ENCODE measurements at regions of chr20 and their contacts with region 1.

Region 1: GRCh38 chr20:63309261-63310071 is 16.5 kb downstream of the COL20A1 start:
- DNase-seq: peak; percentile 75
- ATAC-seq: peak; percentile 76
- H3K4me3 Mint-ChIP-seq: no peak overlapping the region
- H3K27ac Mint-ChIP-seq: no peak overlapping the region
- H3K4me1 Mint-ChIP-seq: no peaks in the 10 kb centered on the region
- H3K27me3 Mint-ChIP-seq: peaks cover 3% of the 10 kb centered on the region; the same call in 1 of the 2 replicates
- CTCF ChIP-seq: peak; percentile 94

Region 2: GRCh38 chr20:63272584-63273579 is 36.6 kb before region 1 on chr20 and contains the start of gene ARFGAP1:
- CTCF ChIA-PET with region 1: interaction called, 11 read pairs
- POLR2A ChIA-PET with region 1: no interaction called
- DNase-seq: peak; percentile 92
- ATAC-seq: peak; percentile 93
- H3K4me3 Mint-ChIP-seq: peak within 1 kb of the TSS; percentile 92
- H3K27ac Mint-ChIP-seq: peak within 1 kb of the TSS; percentile 94
- H3K4me1 Mint-ChIP-seq: peaks cover 16% of the 10 kb centered on the region
- H3K27me3 Mint-ChIP-seq: no peaks in the 10 kb centered on the region
- CTCF ChIP-seq: no peak
- total RNA-seq, gene ARFGAP1: 115 to 207 TPM (median 121 TPM) in 3 replicates

Region 3: DNA sequence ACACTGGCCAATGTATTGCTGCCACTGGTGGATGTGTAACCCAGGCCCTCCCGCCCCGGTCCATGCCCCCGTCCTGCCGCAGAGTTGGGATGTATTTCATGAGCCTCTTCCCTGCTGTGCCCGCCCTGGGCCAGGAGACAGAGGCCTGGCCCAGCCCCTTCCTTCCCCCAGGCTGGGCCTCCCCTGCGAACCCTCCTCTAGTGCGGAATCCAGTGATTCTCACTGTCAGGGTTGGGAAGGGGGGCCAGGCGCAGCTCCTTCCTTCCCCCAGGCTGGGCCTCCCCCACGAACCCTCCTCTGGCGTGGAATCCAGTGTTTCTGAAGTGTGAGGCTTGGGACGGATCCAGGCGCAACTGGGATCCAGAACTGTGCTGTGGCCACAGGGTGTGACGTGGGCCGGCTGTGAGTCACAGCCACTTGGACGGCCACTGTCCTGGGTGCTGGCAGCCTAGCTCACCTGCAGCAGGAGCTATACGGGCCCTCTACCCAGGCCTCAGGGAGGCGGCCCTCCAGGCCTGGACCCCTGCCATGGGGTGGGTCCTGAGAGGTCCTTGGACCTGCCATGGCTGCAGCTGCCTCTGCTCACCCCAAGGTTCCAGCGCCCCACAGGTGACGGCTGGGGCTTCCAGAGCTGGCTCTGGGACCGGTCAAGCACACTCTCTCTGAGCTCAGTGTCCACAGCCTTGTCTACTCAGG is 11.8 kb after region 1 on chr20:
- CTCF ChIA-PET with region 1: interaction called, 17 read pairs
- POLR2A ChIA-PET with region 1: no interaction called
- DNase-seq: no peak
- ATAC-seq: no peak
- H3K4me3 Mint-ChIP-seq: no peak overlapping the region
- H3K27ac Mint-ChIP-seq: no peak overlapping the region
- H3K4me1 Mint-ChIP-seq: peaks cover 2% of the 10 kb centered on the region; the same call in 1 of the 2 replicates
- H3K27me3 Mint-ChIP-seq: no peaks in the 10 kb centered on the region
- CTCF ChIP-seq: no peak

Region 4: GRCh38 chr20:63351811-63352591 is 42.5 kb after region 1 on chr20:
- CTCF ChIA-PET with region 1: interaction called, 18 read pairs
- POLR2A ChIA-PET with region 1: no interaction called
- DNase-seq: peak; percentile 79
- ATAC-seq: peak; percentile 87
- H3K4me3 Mint-ChIP-seq: no peak overlapping the region
- H3K27ac Mint-ChIP-seq: no peak overlapping the region
- H3K4me1 Mint-ChIP-seq: peaks cover 6% of the 10 kb centered on the region
- H3K27me3 Mint-ChIP-seq: no peaks in the 10 kb centered on the region
- CTCF ChIP-seq: no peak

Region 5: GRCh38 chr20:63366390-63367365 is 57.2 kb after region 1 on chr20:
- CTCF ChIA-PET with region 1: interaction called, 25 read pairs
- POLR2A ChIA-PET with region 1: no interaction called
- DNase-seq: no peak
- ATAC-seq: no peak
- H3K4me3 Mint-ChIP-seq: no peak overlapping the region
- H3K27ac Mint-ChIP-seq: no peak overlapping the region; the same call in 1 of the 2 replicates
- H3K4me1 Mint-ChIP-seq: peaks cover 18% of the 10 kb centered on the region
- H3K27me3 Mint-ChIP-seq: peaks cover 9% of the 10 kb centered on the region
- CTCF ChIP-seq: no peak

Region 6: GRCh38 chr20:63495741-63496595 is 186.5 kb after region 1 on chr20:
- CTCF ChIA-PET with region 1: interaction called, 12 read pairs
- POLR2A ChIA-PET with region 1: no interaction called
- DNase-seq: peak; percentile 87
- ATAC-seq: peak; percentile 61
- H3K4me3 Mint-ChIP-seq: peak overlapping the region; percentile 52
- H3K27ac Mint-ChIP-seq: no peak overlapping the region
- H3K4me1 Mint-ChIP-seq: peaks cover 7% of the 10 kb centered on the region
- H3K27me3 Mint-ChIP-seq: peaks cover 38% of the 10 kb centered on the region
- CTCF ChIP-seq: peak; percentile 97

Region 7: DNA sequence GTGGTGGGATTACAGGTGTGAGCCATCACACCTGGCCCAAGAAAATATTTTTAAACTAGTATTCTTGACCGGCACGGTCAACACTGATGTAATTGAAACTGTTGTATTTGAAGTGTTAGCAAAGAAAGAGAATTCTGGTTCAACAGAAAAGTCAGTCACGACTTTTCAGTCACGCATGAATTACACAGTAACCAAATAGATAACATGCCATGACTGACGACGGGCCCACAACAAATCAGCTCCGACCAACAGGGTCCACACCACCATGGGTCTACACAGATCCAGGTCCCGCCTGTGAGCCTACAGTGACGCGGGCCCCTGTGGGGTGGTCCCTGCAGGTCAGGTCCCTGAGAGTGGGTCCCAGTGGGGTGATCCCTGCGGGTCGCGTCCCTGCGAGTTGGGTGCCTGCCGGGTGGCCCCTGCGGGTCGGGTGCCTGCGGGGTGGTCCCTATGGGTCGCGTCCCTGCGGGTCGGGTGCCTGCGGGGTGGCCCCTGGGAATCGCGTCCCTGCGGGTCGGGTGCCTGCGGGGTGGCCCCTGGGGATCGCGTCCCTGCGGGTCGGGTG is 316.5 kb after region 1 on chr20:
- CTCF ChIA-PET with region 1: no interaction called
- POLR2A ChIA-PET with region 1: no interaction called
- DNase-seq: no peak
- ATAC-seq: peak; percentile 29; the same call in 1 of the 2 replicates
- H3K4me3 Mint-ChIP-seq: peak overlapping the region; percentile 70
- H3K27ac Mint-ChIP-seq: peak overlapping the region; percentile 97
- H3K4me1 Mint-ChIP-seq: peaks cover 22% of the 10 kb centered on the region
- H3K27me3 Mint-ChIP-seq: peaks cover 1% of the 10 kb centered on the region; the same call in 1 of the 2 replicates
- CTCF ChIP-seq: no peak

Measured in WTC11 (cell line).